ENCODE measurements at regions of chr6 and their contacts with region 1.

Region 1: DNA sequence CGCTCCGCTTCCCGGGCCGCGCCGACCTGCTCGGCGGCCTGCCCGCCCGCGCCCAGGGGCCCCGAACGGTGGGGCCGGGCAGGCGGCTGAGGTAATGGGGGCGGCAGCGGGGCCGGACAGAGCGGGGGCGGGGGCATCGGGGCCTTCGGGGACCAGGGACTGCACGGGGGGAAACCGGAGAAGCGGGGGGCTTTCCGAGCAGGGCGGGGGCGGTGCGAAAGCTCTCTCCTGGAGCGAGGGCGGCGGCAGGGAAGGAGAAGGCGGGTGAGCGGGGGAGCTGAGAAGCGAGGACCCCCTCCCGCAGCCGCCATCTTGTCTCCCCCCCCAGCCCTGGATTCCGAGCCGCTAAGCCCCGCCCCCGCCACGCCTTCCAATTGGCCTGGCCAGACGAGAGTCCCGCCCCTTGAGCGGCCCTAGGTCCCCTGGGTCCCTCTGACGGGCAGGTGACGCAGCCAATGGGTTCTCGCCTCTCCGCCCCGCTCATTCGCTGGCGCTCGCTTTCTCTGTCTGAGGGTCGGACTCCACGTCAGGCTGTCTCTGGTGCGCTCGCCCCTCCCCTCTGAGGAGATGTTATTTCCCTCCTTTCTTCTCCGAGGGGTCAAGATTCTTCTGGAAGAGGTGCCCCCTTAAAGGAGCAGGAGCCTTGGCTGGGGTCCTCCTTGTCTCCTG is 470 bp downstream of the BRPF3 start:
- DNase-seq: peak; percentile 98 to 99 (median 99)
- ATAC-seq: peak; percentile 97
- H3K4me3 ChIP-seq: peak overlapping the region; percentile 55 to 58
- H3K27ac ChIP-seq: peak overlapping the region; percentile 87 to 94
- H3K4me1 ChIP-seq: peaks cover 11 to 28% of the 10 kb centered on the region in 2 donors
- H3K27me3 ChIP-seq: no peaks in the 10 kb centered on the region
- CTCF ChIP-seq: no peak

Region 2: GRCh38 chr6:35468181-35468979 is 728.6 kb before region 1 on chr6 and contains the start of gene RPL10A:
- intact Hi-C with region 1: no loop called
- DNase-seq: peak; percentile 96 to 98 (median 96)
- ATAC-seq: peak; percentile 96
- H3K4me3 ChIP-seq: peak within 1 kb of the TSS; percentile 81 to 90
- H3K27ac ChIP-seq: peak within 1 kb of the TSS; percentile 87 to 89
- H3K4me1 ChIP-seq: peaks cover 15 to 43% of the 10 kb centered on the region in 2 donors
- H3K27me3 ChIP-seq: no peaks in the 10 kb centered on the region
- CTCF ChIP-seq: peak; percentile 91 to 96
- polyA plus RNA-seq, gene RPL10A: 2,223 to 2,634 (median 2,506) TPM

Region 3: GRCh38 chr6:35931120-35931561 is 265.9 kb before region 1 on chr6:
- intact Hi-C with region 1: no loop called
- DNase-seq: peak in 2 of 4 donors; percentile 4 to 74
- ATAC-seq: no peak
- H3K4me3 ChIP-seq: no peak overlapping the region
- H3K27ac ChIP-seq: no peak overlapping the region
- H3K4me1 ChIP-seq: no peaks in the 10 kb centered on the region
- H3K27me3 ChIP-seq: no peaks in the 10 kb centered on the region
- CTCF ChIP-seq: no peak

Region 4: DNA sequence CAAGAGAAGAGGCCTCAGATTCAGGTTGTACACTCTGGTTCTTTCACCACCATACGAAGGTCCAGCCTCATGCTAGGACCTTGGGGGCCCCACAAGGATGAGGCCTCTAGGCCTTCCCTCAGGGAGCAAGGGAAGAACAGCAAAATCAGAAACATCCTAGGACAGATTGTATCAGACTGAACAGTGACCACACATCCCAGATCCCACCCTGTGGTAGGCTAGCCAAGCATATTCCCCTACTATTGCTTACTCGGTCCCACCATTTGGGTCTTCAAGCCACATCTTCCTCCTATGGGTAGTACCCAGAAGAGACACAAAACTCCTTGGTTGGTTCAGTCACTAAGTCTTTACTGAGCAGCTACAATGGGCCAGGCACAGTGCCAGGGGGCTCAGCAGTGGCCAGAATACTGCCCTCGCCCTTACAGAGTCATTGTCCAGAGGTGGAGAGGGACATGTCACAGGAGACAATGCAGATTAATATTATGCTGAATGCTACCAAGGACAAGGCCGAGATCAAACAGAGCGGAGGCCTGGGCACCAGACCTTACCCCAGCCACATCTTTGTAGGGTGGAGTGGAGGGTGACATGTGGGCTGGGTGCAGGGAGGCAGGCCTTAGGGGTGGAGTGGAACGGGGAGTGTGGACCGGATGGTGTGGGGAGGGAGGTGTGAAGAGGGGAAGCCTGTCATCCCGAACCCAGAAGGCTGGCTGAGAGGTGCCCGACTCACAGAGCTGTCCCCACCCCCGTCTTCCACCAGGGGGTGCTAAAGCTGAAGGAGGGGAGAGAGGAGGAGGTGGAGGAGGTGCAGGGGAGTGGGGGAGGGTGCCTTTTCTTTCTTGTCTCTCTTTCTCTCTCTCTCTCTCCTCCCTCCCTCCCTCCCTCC is 73.5 kb before region 1 on chr6:
- intact Hi-C with region 1: loop called in 1 of 2 experiments (anchors 10 kb)
- DNase-seq: peak; percentile 47 to 91 (median 86)
- ATAC-seq: peak; percentile 72
- H3K4me3 ChIP-seq: no peak overlapping the region
- H3K27ac ChIP-seq: peak overlapping the region in 1 of 2 donors; percentile 64
- H3K4me1 ChIP-seq: peaks cover 8 to 94% of the 10 kb centered on the region in 2 donors
- H3K27me3 ChIP-seq: no peaks in the 10 kb centered on the region
- CTCF ChIP-seq: peak; percentile 45 to 79

Measured in left lung (tissue), 14 donors.